Activated B cell treated with CpG ODN at 0.5 μM for 24 hours (primary cell): ENCODE measurements at regions of chr11 and their contacts with region 1.

Region 1: DNA sequence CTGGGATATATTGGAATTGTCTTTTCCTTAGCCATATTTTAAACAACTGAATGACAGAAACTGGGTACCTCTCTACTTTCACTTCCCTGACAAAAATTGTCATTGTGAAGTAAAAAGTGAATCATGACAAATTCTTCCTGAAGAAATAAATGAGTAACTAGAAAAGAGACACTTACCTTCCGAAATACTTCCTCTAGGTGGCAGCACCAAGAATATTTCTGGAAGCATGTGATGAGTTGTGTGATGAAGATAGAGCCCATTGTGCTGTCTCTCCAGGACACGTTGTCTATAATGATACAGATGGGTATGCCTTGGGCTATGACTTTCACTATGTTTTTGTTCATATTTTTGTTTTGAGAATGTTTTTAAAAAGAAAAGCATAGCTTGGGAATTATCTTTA is 21.5 kb downstream of the CASP4 start:
- DNase-seq: no peak
- ATAC-seq: peak; percentile 66
- H3K4me3 Mint-ChIP-seq: no peak overlapping the region
- H3K27ac Mint-ChIP-seq: no peak overlapping the region
- H3K4me1 Mint-ChIP-seq: peaks cover 7% of the 10 kb centered on the region
- H3K27me3 Mint-ChIP-seq: no peaks in the 10 kb centered on the region
- CTCF ChIP-seq: peak; percentile 59

Region 2: DNA sequence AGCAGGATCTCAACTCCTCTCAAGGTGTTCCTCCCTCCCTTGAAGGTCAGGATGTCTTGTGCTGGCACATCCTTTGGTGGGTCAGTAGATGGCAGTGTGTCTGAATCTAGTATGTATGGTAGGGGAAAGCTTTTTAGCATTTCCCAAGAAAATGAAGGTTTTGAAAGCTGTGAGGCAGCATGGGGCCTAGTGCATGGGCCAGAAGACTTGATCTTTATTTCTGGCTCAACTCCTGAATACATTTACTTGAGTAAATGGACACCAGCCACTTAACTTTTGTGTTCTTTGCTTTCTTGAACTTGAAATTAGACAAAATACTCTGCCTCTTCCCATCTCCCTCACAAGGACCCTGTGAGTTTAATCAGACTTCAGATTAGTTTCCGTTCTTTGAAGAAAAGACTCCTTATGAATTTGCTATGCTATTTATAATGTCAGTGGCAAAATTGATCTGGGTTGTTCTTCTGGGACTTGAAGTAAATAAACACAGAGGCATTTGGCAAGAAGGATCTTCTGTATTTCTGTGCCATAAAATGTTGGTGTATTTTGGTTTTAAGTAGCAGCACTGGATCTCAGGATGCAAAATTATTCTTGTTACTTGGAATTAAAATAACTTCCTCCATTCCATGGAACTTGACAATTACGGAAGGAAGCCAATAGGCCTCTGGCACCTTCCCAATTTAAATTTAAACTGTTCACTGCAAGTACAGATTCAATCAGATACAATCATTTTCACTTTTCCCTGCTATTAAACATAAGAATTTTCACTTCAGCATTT is 337.4 kb before region 1 on chr11:
- CTCF ChIA-PET with region 1: no interaction called
- POLR2A ChIA-PET with region 1: no interaction called
- intact Hi-C with region 1: loop called (anchors 2 kb)
- DNase-seq: no peak
- ATAC-seq: peak; percentile 77
- H3K4me3 Mint-ChIP-seq: no peak overlapping the region
- H3K27ac Mint-ChIP-seq: no peak overlapping the region
- H3K4me1 Mint-ChIP-seq: no peaks in the 10 kb centered on the region
- H3K27me3 Mint-ChIP-seq: peaks cover 2% of the 10 kb centered on the region
- CTCF ChIP-seq: no peak

Region 3: DNA sequence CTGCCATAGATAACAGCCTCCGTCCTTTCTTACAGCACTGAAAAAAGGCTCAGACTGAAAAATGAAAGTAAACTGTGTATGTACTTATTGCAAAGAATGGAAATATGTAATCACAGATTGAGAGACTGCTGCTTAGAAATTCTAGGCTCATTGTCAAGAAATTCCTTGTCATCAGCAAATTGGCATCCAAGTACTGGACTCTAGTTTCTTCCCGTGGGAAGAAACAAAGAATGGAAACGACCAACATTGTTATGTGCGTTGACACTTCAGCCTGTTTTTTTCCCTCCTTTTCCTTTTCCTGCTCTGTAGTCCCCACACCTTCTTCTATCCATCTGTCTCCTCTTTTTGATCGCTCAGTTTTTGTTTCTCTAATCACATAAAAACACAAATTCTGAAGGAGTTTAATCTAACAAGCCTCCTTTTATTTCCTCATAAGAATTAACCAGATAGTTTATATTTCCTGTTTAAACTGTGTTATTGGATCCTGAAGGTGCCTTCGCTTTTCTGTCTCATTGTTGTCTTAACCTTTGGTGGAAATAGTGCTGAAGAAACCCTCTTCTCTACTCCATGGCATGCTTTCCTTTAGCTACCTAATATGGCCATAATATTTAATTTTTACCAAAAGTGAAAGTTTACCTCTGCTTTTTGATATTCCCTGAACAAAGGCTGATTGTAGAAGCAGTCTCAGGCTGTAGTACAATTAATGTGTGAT is 28.6 kb before region 1 on chr11:
- CTCF ChIA-PET with region 1: no interaction called
- POLR2A ChIA-PET with region 1: no interaction called
- intact Hi-C with region 1: no loop called
- DNase-seq: no peak
- ATAC-seq: peak; percentile 69
- H3K4me3 Mint-ChIP-seq: peak overlapping the region; percentile 87
- H3K27ac Mint-ChIP-seq: peak overlapping the region; percentile 92
- H3K4me1 Mint-ChIP-seq: peaks cover 74% of the 10 kb centered on the region
- H3K27me3 Mint-ChIP-seq: no peaks in the 10 kb centered on the region
- CTCF ChIP-seq: no peak

Region 4: GRCh38 chr11:104968355-104968855 is 21.5 kb after region 1 on chr11 and contains the start of gene CASP4:
- CTCF ChIA-PET with region 1: interaction called, 3 read pairs
- POLR2A ChIA-PET with region 1: no interaction called
- intact Hi-C with region 1: loop called (anchors 2 kb)
- DNase-seq: no peak
- ATAC-seq: peak; percentile 85
- H3K4me3 Mint-ChIP-seq: peak within 1 kb of the TSS; percentile 94
- H3K27ac Mint-ChIP-seq: peak within 1 kb of the TSS; percentile 94
- H3K4me1 Mint-ChIP-seq: peaks cover 41% of the 10 kb centered on the region
- H3K27me3 Mint-ChIP-seq: no peaks in the 10 kb centered on the region
- CTCF ChIP-seq: no peak
- total RNA-seq, gene CASP4: 87.8 and 88.7 TPM in 2 replicates